ENCODE measurements at regions of chr3 and their contacts with region 1.

Region 1: GRCh38 chr3:104510131-104510849 is 856.4 kb upstream of the ALCAM start:
- DNase-seq: no peak
- H3K4me3 ChIP-seq: peak overlapping the region in 1 of 2 donors; percentile 4
- H3K27ac ChIP-seq: peak overlapping the region; percentile 54 to 57
- H3K4me1 ChIP-seq: peaks cover 5 to 8% of the 10 kb centered on the region in 2 donors
- H3K27me3 ChIP-seq: no peaks in the 10 kb centered on the region
- CTCF ChIP-seq: no peak

Region 2: GRCh38 chr3:104102386-104102785 is 407.9 kb before region 1 on chr3:
- intact Hi-C with region 1: no loop called
- DNase-seq: no peak
- H3K4me3 ChIP-seq: no peak overlapping the region
- H3K27ac ChIP-seq: no peak overlapping the region
- H3K4me1 ChIP-seq: no peaks in the 10 kb centered on the region
- H3K27me3 ChIP-seq: no peaks in the 10 kb centered on the region
- CTCF ChIP-seq: peak in 2 of 3 experiments; percentile 11 to 26

Region 3: GRCh38 chr3:104536715-104537114 is 26.4 kb after region 1 on chr3:
- intact Hi-C with region 1: no loop called
- DNase-seq: no peak
- H3K4me3 ChIP-seq: no peak overlapping the region
- H3K27ac ChIP-seq: no peak overlapping the region
- H3K4me1 ChIP-seq: no peaks in the 10 kb centered on the region
- H3K27me3 ChIP-seq: no peaks in the 10 kb centered on the region
- CTCF ChIP-seq: no peak

Region 4: DNA sequence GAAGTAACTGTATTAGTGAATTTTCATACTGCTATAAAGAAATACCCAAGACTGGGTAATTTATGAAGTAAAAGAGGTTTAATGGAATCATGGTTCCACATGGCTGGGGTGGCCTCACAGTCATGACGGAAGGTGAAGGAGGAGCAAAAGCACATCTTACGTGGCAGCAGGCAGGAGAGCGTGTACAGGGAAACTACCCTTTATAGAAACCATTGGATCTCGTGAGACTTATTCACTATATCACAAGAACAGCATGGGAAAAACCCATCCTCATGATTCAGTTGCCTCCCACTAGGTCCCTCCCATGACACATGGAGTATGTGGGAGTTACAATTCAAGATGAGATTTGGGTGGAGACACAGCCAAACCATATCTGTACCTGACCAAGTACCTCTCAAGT is 44.1 kb after region 1 on chr3:
- intact Hi-C with region 1: loop called (anchors 5 kb)
- DNase-seq: no peak
- H3K4me3 ChIP-seq: no peak overlapping the region
- H3K27ac ChIP-seq: peak overlapping the region; percentile 30 to 32
- H3K4me1 ChIP-seq: peaks cover 0 to 10% of the 10 kb centered on the region in 2 donors
- H3K27me3 ChIP-seq: no peaks in the 10 kb centered on the region
- CTCF ChIP-seq: no peak

Region 5: DNA sequence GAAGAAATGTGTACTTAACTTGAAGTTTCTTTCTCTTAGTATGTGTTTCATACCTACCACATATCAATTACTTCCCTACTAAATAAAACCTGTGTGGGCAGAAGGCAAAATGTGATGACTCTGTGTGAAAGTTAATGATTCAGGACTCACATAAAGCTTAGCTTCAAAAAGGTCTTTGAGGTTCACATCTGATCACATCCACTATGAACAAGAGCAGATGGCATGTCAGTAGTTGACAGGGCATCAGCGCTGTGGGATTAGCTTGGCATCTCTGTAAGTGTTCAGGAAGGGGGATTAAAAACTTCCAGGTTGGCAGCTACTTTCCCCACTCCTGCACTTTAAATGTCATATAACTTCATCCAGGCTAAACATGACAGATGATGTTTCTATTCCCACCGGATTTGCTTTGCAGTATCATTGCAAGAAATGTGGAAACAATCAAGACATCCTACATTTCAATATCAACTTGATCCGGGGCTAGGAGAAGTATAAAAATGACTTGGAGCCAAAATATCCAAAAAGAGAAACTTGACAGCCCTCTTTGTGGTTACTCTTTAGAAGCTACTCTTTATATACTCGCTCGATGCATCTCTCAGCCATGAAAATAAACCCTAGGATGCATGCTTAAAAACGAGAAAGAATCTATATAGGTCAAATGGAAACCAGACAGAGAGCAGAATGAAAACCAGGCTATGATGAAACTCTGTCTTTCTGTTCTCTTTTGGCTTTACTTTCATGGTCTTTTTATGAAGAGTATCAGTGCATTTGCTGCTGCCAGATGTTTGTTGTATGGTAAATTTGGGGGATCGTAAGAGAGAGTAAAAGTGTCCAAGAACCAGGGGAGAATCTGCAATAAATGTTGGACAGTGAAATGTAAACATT is 583.3 kb after region 1 on chr3:
- intact Hi-C with region 1: no loop called
- DNase-seq: no peak
- H3K4me3 ChIP-seq: no peak overlapping the region
- H3K27ac ChIP-seq: no peak overlapping the region
- H3K4me1 ChIP-seq: no peaks in the 10 kb centered on the region
- H3K27me3 ChIP-seq: no peaks in the 10 kb centered on the region
- CTCF ChIP-seq: no peak

Measured in ascending aorta (tissue), 2 donors.